K562 (cell line): ENCODE measurements at regions of chr20 and their contacts with region 1.

Region 1: DNA sequence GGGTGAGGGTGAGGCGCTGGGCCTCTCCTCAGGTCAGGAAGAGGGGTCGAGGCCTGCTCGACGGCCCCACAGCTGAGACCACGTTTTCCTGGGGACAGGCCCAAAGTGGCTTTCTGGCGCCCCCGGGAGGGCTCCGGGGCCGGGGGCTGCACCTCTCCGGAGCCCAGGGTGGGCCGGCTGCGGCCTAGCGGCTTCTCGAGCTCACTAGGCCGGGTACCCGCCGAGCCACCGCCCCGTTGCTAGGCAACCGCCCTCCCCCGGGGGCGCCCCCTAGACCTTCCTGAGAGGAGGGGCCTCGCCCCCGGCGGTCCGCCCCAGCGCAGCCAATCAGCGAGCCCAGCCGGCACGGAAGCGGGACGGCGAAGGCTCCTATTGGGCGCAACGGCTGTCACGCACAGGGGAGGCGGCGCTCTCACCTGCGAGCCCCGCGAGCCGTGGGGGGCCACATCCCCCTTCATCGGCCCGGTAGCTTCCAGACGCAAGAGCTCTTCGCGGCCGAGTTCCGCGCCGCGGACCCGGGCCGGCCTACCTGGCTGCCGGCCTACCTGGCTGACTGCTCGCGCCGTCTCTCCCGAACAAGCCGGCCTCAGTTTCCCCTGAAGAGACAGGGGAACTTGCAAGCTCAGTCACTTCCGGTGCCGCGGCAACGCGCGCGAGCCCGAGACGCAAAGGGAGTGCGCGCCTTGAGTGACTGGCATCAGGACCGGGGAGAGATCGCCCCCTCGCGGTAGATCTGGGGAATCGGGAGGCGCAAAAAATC is 831 bp upstream of the BCL2L1 start:
- DNase-seq: peak; percentile 99 to 100 (median 100)
- ATAC-seq: peak; percentile 94
- H3K4me3 ChIP-seq: peak overlapping the region; percentile 88
- H3K27ac ChIP-seq: peak overlapping the region; percentile 92
- H3K4me1 ChIP-seq: peaks cover 5 to 26% of the 10 kb centered on the region in 2 experiments; a peak in 3 of 5 replicates
- H3K27me3 ChIP-seq: no peaks in the 10 kb centered on the region
- CTCF ChIP-seq: peak; percentile 91 to 97 (median 96)
- EP300 ChIP-seq: peak; percentile 31; the same call in 1 of the 2 replicates
- POLR2A ChIP-seq: no peak; the same call in 1 of the 2 replicates
- RAD21 ChIP-seq: peak; percentile 95 to 97

Region 2: DNA sequence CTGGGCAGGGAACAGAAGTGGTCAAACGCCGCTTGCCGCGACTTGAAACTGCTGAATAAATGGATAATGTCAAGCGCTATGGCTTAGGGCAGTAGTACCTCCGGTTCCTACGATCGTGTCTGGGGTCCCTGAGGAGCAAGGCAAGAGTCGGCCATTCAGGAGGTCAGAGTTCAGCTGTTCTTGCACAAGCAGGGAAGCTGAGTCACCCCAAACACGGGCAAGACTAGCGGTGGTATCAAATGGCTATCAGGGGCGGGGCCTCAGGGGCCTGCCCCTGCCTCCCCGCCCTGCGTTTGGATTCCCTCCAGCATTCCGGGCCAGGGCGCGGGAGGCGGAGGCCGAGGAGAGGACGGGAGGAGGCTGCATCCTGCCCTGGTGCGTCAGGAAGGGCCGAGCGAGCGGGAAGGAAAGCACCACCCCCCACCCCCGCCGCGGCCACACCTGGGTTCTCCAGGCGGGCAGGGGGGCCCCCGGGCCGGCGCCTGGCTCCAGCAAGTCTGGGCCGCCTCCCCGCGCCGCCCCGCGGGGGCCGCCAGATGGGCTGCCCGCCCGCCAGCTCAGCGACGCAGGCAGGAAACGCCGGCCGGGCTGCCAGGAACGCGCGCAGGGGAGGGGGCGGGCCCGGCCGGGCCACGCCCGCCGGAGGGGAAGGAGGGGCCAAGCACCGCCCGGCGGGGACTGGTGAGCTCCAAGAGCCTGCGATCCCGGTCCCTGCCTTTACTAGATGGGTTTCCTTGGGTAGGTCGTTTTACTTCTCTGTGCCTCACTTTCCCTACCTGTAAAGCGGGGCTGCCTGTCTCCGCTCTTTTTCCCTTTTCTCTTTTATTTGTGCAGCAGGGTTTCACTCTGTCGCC is 150.6 kb before region 1 on chr20:
- CTCF ChIA-PET with region 1: interaction called, 6 read pairs
- POLR2A ChIA-PET with region 1: interaction called, 3 read pairs
- in situ Hi-C with region 1: loop called (anchors 5 kb)
- intact Hi-C with region 1: no loop called
- DNase-seq: peak; percentile 93 to 99 (median 95)
- ATAC-seq: peak; percentile 87
- H3K4me3 ChIP-seq: peak overlapping the region; percentile 84
- H3K27ac ChIP-seq: peak overlapping the region; percentile 96
- H3K4me1 ChIP-seq: peaks cover 10 to 48% of the 10 kb centered on the region in 2 experiments; a peak in 4 of 5 replicates
- H3K27me3 ChIP-seq: no peaks in the 10 kb centered on the region
- CTCF ChIP-seq: peak in 2 of 3 experiments; percentile 0 to 9; a peak in 1 of 6 replicates
- EP300 ChIP-seq: peak; percentile 20
- POLR2A ChIP-seq: peak; percentile 83
- RAD21 ChIP-seq: peak; percentile 1 to 37; a peak in 1 of 4 replicates

Region 3: DNA sequence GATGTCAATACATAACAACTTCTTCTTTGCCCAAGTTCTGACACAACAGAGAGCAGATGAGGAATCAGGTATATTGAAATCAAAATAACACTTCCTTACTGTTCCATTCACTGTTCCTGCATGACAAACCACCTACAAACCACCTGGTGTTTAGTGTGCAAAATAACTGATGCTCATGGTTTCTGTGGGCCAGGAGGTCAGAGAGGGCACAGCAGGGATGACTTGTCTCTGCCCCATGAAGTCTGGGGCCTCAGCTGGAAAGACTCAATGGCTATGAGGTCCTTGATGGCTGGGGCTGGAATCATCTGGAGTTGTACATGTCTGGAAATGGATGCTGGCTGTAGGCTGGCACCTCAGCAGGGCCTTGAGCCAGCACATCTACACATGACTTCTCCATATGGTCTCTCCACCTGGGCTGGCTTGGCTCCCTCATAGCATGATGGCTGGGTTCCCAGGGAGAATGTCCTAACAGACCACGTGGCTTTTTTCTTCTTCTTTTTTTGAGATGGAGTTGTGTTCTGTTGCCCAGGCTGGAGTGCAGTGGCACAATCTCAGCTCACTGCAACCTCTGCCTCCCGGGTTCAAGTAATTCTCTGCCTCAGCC is 93.2 kb before region 1 on chr20:
- CTCF ChIA-PET with region 1: interaction called, 10 read pairs
- POLR2A ChIA-PET with region 1: interaction called, 3 read pairs
- in situ Hi-C with region 1: loop called (anchors 5 kb)
- intact Hi-C with region 1: loop called (anchors 1 kb)
- DNase-seq: no peak
- ATAC-seq: no peak
- H3K4me3 ChIP-seq: no peak overlapping the region
- H3K27ac ChIP-seq: no peak overlapping the region
- H3K4me1 ChIP-seq: peaks cover 8 to 19% of the 10 kb centered on the region in 2 experiments; a peak in 4 of 5 replicates
- H3K27me3 ChIP-seq: no peaks in the 10 kb centered on the region; a peak in 1 of 5 replicates
- CTCF ChIP-seq: no peak
- EP300 ChIP-seq: no peak
- POLR2A ChIP-seq: no peak
- RAD21 ChIP-seq: no peak

Region 4: DNA sequence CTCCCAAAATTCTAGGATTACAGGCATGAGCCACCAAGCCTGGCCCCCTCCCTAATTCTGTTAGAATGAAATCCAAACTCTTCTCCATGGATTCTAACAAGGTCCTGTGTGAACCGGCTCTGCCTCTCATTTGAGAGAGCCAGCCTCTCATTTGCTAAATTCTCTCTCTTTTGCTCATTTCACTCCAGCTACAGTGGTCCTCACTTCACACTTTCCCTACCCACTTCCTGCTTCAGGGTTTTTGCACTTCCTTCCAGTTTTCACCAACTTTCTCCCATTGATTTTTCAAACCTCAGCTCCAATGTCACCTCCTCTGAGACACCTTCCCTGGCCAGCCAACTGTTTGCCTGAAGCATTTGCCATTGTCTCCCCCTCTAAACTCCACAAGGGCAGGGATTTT is 80.7 kb before region 1 on chr20:
- CTCF ChIA-PET with region 1: no interaction called
- POLR2A ChIA-PET with region 1: no interaction called
- in situ Hi-C with region 1: no loop called
- intact Hi-C with region 1: no loop called
- DNase-seq: no peak
- ATAC-seq: no peak
- H3K4me3 ChIP-seq: no peak overlapping the region
- H3K27ac ChIP-seq: no peak overlapping the region
- H3K4me1 ChIP-seq: peaks cover 8 to 10% of the 10 kb centered on the region in 2 experiments
- H3K27me3 ChIP-seq: no peaks in the 10 kb centered on the region
- CTCF ChIP-seq: no peak
- EP300 ChIP-seq: no peak
- POLR2A ChIP-seq: no peak
- RAD21 ChIP-seq: no peak

Region 5: DNA sequence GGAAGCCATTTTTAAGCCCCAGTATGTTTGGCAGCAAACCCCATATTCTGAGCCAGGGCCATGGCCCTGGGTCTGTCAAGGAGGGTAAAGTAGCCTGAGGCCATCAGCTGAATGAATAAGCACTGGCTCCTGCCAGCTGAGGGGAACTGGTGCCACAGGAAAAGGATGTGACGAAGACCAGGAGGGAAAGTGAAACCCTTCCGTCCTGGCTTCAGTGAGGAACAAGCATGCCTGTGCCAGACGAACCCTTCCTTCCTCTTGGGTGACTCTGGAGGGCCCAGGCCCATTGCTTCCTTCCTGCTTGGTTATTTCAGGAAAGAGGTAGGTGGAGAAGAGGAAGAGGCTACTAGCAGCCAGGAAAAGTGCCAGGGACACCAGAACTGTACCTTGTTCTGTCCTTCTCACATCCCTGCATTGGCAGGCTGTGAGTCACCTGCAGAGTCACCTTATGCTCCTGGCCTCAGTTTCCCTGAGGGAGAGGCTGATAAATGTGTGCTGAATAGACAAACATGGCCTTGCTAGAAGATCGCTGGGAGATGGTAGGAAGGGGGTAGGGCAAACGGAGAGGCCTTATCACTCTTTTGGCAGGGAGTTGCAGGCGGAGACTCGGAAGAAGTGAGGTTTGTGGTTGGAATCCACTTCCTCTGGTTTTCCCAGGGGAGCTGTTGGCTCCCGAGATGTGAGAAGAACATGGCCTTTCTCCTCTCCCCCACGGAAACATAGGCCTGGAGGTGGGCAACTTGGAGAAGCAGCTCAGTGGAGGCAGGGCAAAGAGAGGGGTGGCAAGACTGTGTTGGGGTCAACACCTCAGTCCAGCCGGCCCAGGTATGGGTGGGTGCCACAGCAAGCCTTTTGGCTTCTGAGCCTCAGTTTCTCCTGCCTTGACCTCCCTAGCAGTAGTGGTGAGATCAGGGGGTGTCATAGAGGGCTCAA is 48.3 kb before region 1 on chr20:
- CTCF ChIA-PET with region 1: interaction called, 3 read pairs
- POLR2A ChIA-PET with region 1: interaction called, 21 read pairs
- in situ Hi-C with region 1: no loop called
- intact Hi-C with region 1: loop called (anchors 2 kb)
- DNase-seq: peak; percentile 76 to 91 (median 78)
- ATAC-seq: peak; percentile 60
- H3K4me3 ChIP-seq: peak overlapping the region; percentile 20; the same call in 1 of the 2 replicates
- H3K27ac ChIP-seq: peak overlapping the region; percentile 94
- H3K4me1 ChIP-seq: peaks cover 84 to 91% of the 10 kb centered on the region in 2 experiments
- H3K27me3 ChIP-seq: no peaks in the 10 kb centered on the region
- CTCF ChIP-seq: no peak
- EP300 ChIP-seq: peak; percentile 95
- POLR2A ChIP-seq: peak; percentile 70
- RAD21 ChIP-seq: peak in 1 of 2 experiments; percentile 12; a peak in 1 of 4 replicates

Region 6: GRCh38 chr20:31738729-31739561 is 15.4 kb after region 1 on chr20 and contains the start of gene TPX2:
- CTCF ChIA-PET with region 1: interaction called, 4 read pairs
- POLR2A ChIA-PET with region 1: interaction called, 13 read pairs
- in situ Hi-C with region 1: no loop called
- intact Hi-C with region 1: no loop called
- DNase-seq: peak; percentile 98 to 100 (median 100)
- ATAC-seq: peak; percentile 96
- H3K4me3 ChIP-seq: peak within 1 kb of the TSS; percentile 82
- H3K27ac ChIP-seq: peak within 1 kb of the TSS; percentile 95
- H3K4me1 ChIP-seq: peaks cover 5 to 11% of the 10 kb centered on the region in 2 experiments; a peak in 4 of 5 replicates
- H3K27me3 ChIP-seq: no peaks in the 10 kb centered on the region
- CTCF ChIP-seq: peak; percentile 30 to 80 (median 39); a peak in 5 of 6 replicates
- EP300 ChIP-seq: no peak
- POLR2A ChIP-seq: peak; percentile 92
- RAD21 ChIP-seq: peak in 1 of 2 experiments; percentile 9; a peak in 1 of 4 replicates
- polyA plus RNA-seq, gene TPX2: 48.0 to 57.8 TPM